Right ventricle myocardium inferior (tissue), 1 donor: ENCODE measurements at regions of chr5 and their contacts with region 1.

Region 1: DNA sequence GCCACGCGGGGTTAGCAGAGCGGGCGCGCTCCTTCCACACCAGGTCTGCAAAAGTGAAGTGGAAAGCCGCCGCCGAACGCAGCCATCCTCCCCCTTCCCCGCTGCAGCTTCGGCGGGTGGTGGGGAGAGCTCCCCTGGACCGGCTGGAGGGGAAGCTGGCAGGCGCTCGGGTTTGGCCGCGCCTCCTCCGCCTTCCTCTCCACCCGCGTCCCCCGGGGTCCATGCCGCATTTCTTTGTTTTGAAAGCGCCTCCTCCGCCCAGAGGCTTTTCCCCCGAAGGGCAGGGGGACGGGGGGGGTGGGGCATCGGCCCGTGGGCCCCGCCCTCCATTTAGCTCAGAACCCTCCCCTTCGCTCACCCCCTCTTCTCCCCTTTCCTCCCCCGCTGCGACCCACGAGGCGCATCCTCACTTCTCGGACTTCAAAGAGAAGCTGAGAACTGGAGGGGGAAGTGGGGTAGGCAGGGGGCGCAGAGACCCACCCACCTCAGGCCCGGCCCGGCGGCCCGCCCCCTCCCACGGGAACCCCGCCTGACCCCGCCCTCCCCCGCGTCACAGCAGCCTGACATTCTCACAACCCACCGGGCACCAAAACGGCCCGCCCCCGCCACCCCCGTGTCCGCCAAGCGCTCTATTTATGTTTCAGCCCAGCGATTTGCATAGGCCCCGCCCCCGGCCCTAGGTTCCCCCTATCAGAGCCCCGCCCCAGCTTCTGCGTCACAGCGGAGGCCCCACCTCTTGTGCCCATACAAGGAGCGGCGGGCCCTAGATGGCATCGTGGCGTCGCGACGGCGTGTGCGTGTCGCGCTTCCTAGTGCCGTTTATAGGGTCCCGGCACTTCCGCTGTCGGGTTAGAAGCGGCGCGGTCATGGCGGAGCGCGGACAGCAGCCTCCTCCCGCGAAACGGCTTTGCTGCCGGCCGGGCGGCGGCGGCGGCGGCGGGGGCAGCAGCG is at the start of gene ZSWIM6:
- DNase-seq: peak; percentile 100
- ATAC-seq: peak; percentile 95
- total RNA-seq, gene ZSWIM6: 8.1 TPM

Region 2: DNA sequence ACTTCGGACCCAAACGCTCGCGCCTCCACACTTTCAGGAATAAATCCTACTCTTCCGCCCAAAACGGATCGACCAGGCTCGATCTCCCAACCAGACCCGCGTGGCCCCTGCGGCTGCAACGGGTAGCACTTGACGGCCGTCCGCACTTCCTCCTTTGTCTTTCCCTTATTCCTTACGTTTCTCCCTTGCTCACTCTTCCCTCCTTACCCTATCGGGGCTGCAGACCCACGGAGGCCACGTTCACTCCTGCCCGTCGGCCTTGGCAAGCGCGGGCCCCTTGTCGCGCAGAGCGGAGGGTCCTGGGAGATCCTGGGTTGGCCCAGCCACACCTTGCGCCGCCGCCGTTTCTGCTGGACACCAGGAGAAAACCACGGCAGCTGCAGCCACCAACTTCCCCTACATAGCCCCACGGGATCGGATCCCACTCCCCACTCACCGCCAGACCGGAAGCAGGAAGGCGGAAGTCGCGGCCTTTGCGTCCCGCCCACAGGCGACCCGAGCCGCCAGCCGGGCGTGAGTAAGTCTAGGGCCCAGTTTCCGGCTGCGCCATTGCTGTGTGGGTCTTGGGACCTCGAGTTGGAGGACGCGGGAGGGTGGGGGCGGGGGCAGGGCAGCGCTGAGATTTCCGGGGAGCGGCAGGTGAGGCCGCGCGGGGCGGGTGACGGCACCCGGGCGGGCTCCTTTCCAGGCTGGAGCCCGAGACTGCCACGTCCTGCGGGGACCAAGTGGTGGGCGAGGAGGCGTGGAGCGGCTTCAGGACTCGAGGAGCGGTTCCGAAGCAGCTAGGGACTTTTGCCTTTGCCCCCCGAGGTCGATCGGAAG is 169.5 kb before region 1 on chr5 and contains the start of gene SMIM15:
- intact Hi-C with region 1: loop called (anchors 2 kb)
- DNase-seq: peak; percentile 94
- ATAC-seq: peak; percentile 98
- total RNA-seq, gene SMIM15: 24.1 TPM

Region 3: GRCh38 chr5:61347080-61347479 is 15.4 kb after region 1 on chr5:
- intact Hi-C with region 1: no loop called
- DNase-seq: no peak
- ATAC-seq: no peak

Region 4: GRCh38 chr5:61394078-61394704 is 62.5 kb after region 1 on chr5:
- intact Hi-C with region 1: no loop called
- DNase-seq: no peak
- ATAC-seq: no peak

Region 5: DNA sequence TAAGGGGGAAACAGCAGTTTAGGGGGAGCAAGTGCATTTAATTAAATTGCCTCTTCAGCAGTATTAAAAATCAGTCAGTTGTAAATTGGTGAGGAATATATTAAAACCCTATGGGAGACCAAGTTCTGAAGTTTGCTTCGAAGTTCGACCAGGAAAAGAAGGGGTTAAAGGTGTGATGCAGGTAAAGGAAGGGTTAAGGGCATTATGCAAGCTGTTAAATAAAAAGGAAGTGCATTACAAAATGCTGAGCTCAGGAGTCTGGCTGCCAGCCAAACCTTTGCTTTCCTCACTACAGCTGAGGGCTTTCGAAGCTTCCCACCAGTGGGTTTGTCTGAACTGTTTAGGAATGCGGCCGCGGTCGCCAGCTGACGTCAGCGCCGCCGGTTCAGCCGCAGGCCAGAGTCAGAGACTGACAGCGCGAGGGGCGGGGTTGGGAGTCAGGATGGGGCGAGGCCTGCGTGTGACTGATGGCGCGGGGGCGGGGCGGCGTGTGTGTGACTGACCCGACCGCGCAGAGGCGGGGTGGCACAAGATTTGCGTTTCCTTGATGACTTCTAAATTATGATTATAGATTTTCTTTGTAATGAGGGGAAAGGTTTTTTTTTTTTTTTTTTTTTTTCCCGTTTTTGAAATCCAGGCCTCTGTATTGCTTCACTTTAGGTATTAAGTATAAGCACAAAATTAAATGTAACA is 76.9 kb after region 1 on chr5:
- intact Hi-C with region 1: loop called (anchors 2 kb)
- DNase-seq: peak; percentile 100
- ATAC-seq: peak; percentile 100

Region 6: DNA sequence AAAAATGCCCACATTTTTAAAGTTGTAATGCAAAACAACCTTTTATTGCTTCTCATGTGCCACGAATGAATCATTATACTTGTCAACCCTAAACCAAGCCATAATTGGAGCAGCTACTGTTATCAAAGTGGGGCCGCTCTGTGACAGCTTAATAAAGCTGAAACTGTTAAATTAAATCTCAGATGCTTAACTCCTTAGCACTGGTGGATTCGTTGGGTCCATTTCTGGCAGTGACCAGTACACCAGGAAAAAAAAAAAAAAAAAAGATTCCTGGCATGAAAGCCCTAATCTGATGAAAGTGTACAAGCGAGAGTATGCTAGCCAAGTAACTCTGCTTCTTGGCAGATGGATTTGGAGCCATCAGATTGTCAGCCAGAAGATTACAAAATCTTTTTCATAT is 165.2 kb after region 1 on chr5:
- intact Hi-C with region 1: no loop called
- DNase-seq: no peak
- ATAC-seq: peak; percentile 42

Region 7: DNA sequence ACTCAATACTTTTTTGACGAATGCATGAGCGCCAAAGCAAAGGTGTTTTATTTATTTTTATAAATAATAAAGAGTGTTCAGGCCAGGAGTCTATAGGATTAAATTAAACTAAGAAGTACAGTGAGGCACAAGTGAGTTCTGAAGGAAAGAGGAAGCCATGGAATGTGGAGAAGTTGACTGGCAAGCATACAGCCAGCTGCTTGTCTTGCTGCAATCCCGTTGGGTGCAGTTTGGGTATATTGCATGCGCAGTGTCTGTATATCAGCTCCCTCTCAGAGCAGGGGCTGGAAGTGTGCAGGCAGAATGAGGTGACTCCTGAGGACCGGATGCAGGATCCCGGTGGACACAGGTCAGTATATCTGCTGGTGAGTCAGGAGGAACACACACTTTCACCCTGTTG is 316.0 kb after region 1 on chr5:
- intact Hi-C with region 1: no loop called
- DNase-seq: no peak
- ATAC-seq: no peak

Region 8: DNA sequence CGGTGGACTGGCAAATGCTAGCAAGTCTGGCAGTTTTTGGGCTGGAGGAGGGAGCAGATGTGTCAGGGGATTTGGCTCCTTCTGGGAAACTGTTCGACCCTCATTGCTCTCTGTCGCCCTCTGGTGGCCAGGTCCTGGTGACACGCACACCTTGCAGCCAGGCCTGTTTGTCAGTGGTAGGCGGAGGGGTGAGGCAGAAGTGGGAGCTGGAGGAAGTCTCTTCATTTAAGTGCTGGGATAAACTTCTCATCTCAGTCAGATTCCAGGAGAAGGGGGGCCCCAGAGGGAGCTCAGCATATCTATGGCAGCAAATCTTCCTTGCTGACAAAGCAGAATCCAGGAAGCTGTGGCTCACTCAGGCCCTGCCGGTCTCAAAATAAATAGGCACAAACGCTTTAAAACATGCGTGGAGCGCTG is 326.9 kb after region 1 on chr5:
- intact Hi-C with region 1: loop called (anchors 1 kb)
- DNase-seq: peak; percentile 90
- ATAC-seq: peak; percentile 82